ENCODE measurements at regions of chr15 and their contacts with region 1.

Region 1: DNA sequence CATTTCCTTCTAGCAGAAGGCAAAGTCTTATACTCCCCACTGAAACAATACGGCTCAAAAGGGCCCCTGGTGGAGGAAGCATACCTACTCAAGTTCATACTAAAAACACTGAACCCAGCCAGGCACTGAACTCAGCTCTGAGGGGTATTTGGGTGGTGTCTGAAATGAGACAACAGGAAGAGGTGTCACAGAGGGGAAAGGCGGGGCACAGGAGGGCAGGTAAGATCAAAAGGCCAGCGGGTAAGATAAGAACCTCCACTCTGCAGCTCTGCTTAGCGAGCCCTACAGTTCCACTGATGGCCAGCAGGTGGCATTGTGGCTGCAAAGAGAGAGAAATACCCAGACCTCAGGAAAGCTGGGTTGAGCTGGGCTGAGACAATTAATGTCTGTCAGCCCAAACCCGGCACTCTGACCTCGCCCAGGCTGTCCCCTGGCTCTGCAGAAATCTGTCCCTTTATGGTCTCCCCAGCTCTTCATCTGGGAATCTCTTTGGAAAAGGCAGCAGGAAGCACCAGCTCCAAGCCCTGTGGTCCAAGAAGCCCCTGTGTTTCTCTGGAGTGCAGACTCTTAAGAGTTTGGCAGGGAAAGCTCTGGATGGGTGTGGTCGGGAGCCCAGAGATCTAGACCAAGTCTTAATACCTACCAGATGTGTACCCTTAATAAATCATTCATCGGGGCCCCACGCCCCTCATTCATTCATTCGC is 8.4 kb downstream of the MFGE8 start:
- DNase-seq: peak; percentile 94
- ATAC-seq: peak; percentile 91
- H3K4me3 Mint-ChIP-seq: no peak overlapping the region
- H3K27ac Mint-ChIP-seq: peak overlapping the region; percentile 39; the same call in 1 of the 2 replicates
- H3K4me1 Mint-ChIP-seq: peaks cover 64% of the 10 kb centered on the region
- H3K27me3 Mint-ChIP-seq: no peaks in the 10 kb centered on the region; the same call in 1 of the 2 replicates
- CTCF ChIP-seq: peak; percentile 99

Region 2: GRCh38 chr15:88974392-88974791 is 69.6 kb after region 1 on chr15:
- CTCF ChIA-PET with region 1: interaction called, 13 read pairs
- POLR2A ChIA-PET with region 1: no interaction called
- DNase-seq: no peak
- ATAC-seq: no peak
- H3K4me3 Mint-ChIP-seq: no peak overlapping the region
- H3K27ac Mint-ChIP-seq: no peak overlapping the region
- H3K4me1 Mint-ChIP-seq: peaks cover 11% of the 10 kb centered on the region
- H3K27me3 Mint-ChIP-seq: peaks cover 10% of the 10 kb centered on the region; the same call in 1 of the 2 replicates
- CTCF ChIP-seq: no peak

Region 3: DNA sequence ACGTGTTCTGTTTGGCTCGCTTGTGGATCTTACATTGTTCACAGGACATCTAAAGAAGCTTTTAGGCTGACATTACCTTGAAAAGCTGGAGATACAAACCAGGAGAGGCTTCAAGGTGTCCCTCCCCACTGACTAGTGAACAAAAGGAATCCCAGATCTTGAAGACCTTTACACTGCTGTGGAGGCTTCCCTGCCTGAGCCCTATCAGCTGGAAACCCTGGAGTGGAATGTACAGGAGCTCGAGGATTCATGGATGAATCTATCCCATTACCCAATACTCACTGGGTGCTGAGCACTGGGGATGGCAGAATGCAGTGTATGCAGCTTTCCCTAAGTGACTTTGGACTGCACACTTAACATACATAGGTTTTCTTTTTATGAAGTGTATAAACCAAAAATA is 90.7 kb after region 1 on chr15:
- CTCF ChIA-PET with region 1: interaction called, 226 read pairs
- POLR2A ChIA-PET with region 1: interaction called, 5 read pairs
- DNase-seq: no peak
- ATAC-seq: peak; percentile 11
- H3K4me3 Mint-ChIP-seq: peak overlapping the region; percentile 64
- H3K27ac Mint-ChIP-seq: peak overlapping the region; percentile 97; the same call in 1 of the 2 replicates
- H3K4me1 Mint-ChIP-seq: peaks cover 89% of the 10 kb centered on the region
- H3K27me3 Mint-ChIP-seq: peaks cover 31% of the 10 kb centered on the region
- CTCF ChIP-seq: no peak

Region 4: GRCh38 chr15:89017370-89018066 is 112.7 kb after region 1 on chr15:
- CTCF ChIA-PET with region 1: interaction called, 45 read pairs
- POLR2A ChIA-PET with region 1: interaction called, 5 read pairs
- DNase-seq: peak; percentile 96
- ATAC-seq: peak; percentile 91
- H3K4me3 Mint-ChIP-seq: peak overlapping the region; percentile 51
- H3K27ac Mint-ChIP-seq: peak overlapping the region; percentile 38; the same call in 1 of the 2 replicates
- H3K4me1 Mint-ChIP-seq: peaks cover 30% of the 10 kb centered on the region
- H3K27me3 Mint-ChIP-seq: peaks cover 21% of the 10 kb centered on the region
- CTCF ChIP-seq: peak; percentile 73

Region 5: DNA sequence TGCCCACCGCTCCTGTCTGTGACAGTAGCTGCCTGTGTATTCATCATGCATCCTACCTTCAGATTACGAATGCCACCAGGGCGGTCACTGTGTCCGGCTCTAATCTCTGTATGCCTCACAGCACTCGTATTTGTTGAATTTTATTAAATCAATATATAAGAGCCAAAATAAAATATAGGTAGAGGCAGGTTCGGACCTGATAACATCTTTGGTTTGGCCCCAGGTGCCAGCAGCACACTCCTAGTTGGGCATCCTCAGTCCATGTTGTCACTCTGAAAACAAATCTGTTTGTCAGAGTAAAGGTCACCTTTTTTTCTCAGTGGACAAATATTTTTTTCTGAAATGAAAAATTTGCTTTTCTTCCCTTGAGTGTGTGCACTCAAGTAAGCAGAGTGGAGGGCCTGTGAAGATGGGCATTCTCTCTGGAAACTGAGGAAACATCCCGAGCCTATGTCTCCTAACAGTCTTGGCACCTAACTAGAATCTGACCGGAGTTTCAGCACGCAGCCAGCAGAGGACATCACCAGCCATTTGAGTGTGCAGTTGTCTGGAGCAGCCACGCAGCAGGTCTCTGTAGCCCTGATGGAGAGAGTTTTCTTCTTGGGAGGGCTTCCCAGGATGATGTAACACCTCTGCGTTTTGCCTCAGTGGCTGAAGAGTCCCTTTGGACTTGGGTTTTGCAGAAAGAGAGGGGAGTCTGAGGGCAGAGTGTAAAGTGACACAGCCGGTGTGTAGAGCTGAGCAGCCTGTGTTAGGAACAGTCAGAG is 234.8 kb after region 1 on chr15:
- CTCF ChIA-PET with region 1: no interaction called
- POLR2A ChIA-PET with region 1: no interaction called
- DNase-seq: peak; percentile 22
- ATAC-seq: peak; percentile 59
- H3K4me3 Mint-ChIP-seq: no peak overlapping the region
- H3K27ac Mint-ChIP-seq: no peak overlapping the region
- H3K4me1 Mint-ChIP-seq: peaks cover 9% of the 10 kb centered on the region
- H3K27me3 Mint-ChIP-seq: no peaks in the 10 kb centered on the region
- CTCF ChIP-seq: no peak